ENCODE measurements at regions of chr14 and their contacts with region 1.

Region 1: GRCh38 chr14:90815822-90816700 is at the start of gene TTC7B:
- DNase-seq: peak; percentile 24
- ATAC-seq: peak; percentile 98
- H3K4me3 ChIP-seq: peak within 1 kb of the TSS; percentile 100
- H3K27ac ChIP-seq: peak within 1 kb of the TSS; percentile 83
- H3K4me1 ChIP-seq: peaks cover 5% of the 10 kb centered on the region
- H3K27me3 ChIP-seq: peaks cover 16% of the 10 kb centered on the region; the same call in 1 of the 2 replicates
- CTCF ChIP-seq: peak; percentile 45
- POLR2A ChIP-seq: no peak
- RAD21 ChIP-seq: no peak; the same call in 1 of the 2 replicates
- total RNA-seq, gene TTC7B: 16.1 and 18.1 TPM in 2 replicates

Region 2: GRCh38 chr14:90758028-90758889 is 57.8 kb before region 1 on chr14:
- CTCF ChIA-PET with region 1: interaction called, 7 read pairs
- POLR2A ChIA-PET with region 1: no interaction called
- dilution Hi-C with region 1: no loop called
- in situ Hi-C with region 1: no loop called
- intact Hi-C with region 1: loop called (anchors 5 kb)
- DNase-seq: peak; percentile 85
- ATAC-seq: peak; percentile 97
- H3K4me3 ChIP-seq: peak overlapping the region; percentile 59
- H3K27ac ChIP-seq: peak overlapping the region; percentile 50
- H3K4me1 ChIP-seq: peaks cover 6% of the 10 kb centered on the region
- H3K27me3 ChIP-seq: no peaks in the 10 kb centered on the region
- CTCF ChIP-seq: peak; percentile 95
- POLR2A ChIP-seq: 0 out of 2 replicates have a peak, but pooled peaks have one; percentile 22
- RAD21 ChIP-seq: peak; percentile 78

Region 3: GRCh38 chr14:90883782-90884181 is 67.7 kb after region 1 on chr14:
- CTCF ChIA-PET with region 1: no interaction called
- POLR2A ChIA-PET with region 1: no interaction called
- dilution Hi-C with region 1: no loop called
- in situ Hi-C with region 1: no loop called
- intact Hi-C with region 1: no loop called
- DNase-seq: peak; percentile 31
- ATAC-seq: peak; percentile 68
- H3K4me3 ChIP-seq: no peak overlapping the region
- H3K27ac ChIP-seq: no peak overlapping the region; the same call in 1 of the 2 replicates
- H3K4me1 ChIP-seq: no peaks in the 10 kb centered on the region
- H3K27me3 ChIP-seq: no peaks in the 10 kb centered on the region
- CTCF ChIP-seq: no peak
- POLR2A ChIP-seq: no peak
- RAD21 ChIP-seq: no peak